Breast epithelium (tissue), 4 donors: ENCODE measurements at regions of chr1 and their contacts with region 1.

Region 1: DNA sequence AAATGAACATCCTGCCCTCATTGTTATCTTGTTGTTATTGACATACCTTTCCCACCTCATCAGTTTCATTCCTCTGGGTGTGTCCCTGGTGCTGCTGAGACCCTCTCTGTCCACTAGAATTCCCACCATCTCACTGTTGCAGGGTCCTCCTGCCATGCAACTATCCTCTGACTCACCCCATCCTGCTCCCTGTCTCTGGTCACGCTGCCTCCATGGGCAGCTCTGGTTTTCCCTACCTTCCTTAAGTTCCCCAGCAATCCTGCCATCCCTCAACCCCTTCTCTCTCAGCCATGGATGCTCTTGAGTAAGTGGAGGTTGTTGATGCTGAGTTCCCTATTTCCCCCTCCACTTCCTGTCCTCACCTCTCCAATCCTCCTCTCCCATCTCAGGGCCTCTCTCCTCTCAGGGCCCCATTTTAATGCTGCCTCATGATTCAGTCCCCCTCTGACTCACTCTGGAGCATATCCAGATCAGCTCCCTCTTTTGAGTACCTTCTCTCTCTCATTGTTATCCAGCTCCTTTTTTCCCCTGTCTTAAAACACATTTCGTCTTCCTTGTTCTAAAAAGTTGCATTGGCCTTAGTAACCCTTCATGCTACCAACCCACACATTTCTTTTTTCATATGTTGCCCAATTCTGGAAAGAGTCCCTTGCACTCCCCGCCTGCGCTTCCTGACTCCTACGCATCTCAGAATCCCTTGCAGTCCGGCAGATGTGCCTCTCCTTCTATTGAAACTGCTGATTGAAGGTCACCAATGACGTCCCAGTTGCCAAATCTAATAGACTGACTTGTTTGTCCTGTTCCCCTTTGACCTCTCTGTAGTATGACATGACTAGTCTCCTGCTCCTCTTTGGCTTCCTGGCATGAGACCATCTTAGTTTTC is 92.0 kb downstream of the CNIH3 start:
- DNase-seq: no peak
- H3K4me3 ChIP-seq: no peak overlapping the region
- H3K27ac ChIP-seq: peak overlapping the region; percentile 35 to 73
- H3K4me1 ChIP-seq: no peaks in the 10 kb centered on the region
- H3K27me3 ChIP-seq: no peaks in the 10 kb centered on the region
- CTCF ChIP-seq: no peak
- POLR2A ChIP-seq: no peak

Region 2: GRCh38 chr1:224770336-224770693 is 62.2 kb after region 1 on chr1:
- intact Hi-C with region 1: loop called (anchors 2 kb)
- DNase-seq: no peak
- H3K4me3 ChIP-seq: no peak overlapping the region
- H3K27ac ChIP-seq: no peak overlapping the region
- H3K4me1 ChIP-seq: no peaks in the 10 kb centered on the region
- H3K27me3 ChIP-seq: no peaks in the 10 kb centered on the region
- CTCF ChIP-seq: no peak
- POLR2A ChIP-seq: no peak

Region 3: GRCh38 chr1:224800486-224801119 is 92.5 kb after region 1 on chr1:
- intact Hi-C with region 1: no loop called
- DNase-seq: no peak
- H3K4me3 ChIP-seq: no peak overlapping the region
- H3K27ac ChIP-seq: no peak overlapping the region
- H3K4me1 ChIP-seq: no peaks in the 10 kb centered on the region
- H3K27me3 ChIP-seq: no peaks in the 10 kb centered on the region
- CTCF ChIP-seq: no peak
- POLR2A ChIP-seq: no peak